ENCODE measurements at regions of chr11 and their contacts with region 1.

Region 1: GRCh38 chr11:76670485-76671236 is at the start of gene LRRC32:
- DNase-seq: peak; percentile 82
- H3K4me3 ChIP-seq: peak within 1 kb of the TSS; percentile 2 to 67 (median 59)
- H3K27ac ChIP-seq: peak within 1 kb of the TSS; percentile 79
- H3K4me1 ChIP-seq: peaks cover 53% of the 10 kb centered on the region
- H3K27me3 ChIP-seq: no peaks in the 10 kb centered on the region
- CTCF ChIP-seq: peak in 1 of 2 donors; percentile 33
- POLR2A ChIP-seq: peak; percentile 41
- total RNA-seq, gene LRRC32: 77.0 and 117 TPM in 2 replicates

Region 2: DNA sequence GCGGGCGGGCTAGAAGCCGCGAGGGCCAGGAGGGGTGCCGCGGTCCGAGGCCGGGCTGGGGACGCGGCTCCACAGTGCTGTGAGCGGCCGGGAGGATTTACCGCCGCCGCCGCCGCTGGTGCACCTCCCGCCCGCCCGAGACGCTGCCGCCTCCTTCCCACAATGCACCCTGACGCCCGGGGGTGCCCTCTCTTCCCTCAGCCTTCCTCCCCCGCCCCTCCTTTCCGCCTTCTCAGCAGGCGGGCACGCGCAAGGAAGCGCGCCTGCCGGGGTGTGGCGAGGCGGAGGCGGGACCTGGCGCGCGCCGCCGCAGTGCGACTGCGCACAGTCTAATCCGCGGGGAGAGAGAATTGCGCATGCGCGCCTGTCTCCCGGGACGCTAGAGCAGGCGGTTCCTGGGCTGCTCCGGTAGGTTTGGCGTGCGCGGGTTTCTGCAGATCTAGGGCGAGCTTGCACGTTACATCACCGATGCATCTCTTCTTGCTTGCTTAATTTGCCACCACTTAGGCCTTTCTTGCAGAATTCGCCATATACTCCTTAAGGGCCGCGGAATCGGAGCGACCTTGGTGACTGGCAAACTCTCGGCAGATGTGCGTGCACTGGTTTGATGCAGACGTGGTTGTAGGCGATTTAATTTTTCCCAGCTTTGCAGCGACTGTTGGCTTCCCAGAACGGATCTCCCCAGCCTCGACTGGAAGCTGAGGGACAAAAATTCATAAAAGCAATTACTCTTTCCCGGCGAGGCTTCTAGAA is 289.5 kb before region 1 on chr11 and contains the starts of genes GVQW3 and THAP12:
- CTCF ChIA-PET with region 1: no interaction called
- POLR2A ChIA-PET with region 1: no interaction called
- dilution Hi-C with region 1: no loop called
- intact Hi-C with region 1: loop called (anchors 5 kb)
- DNase-seq: peak; percentile 99
- H3K4me3 ChIP-seq: peak within 1 kb of the TSS; percentile 71 to 89 (median 82)
- H3K27ac ChIP-seq: peak within 1 kb of the TSS; percentile 27
- H3K4me1 ChIP-seq: peaks cover 18% of the 10 kb centered on the region
- H3K27me3 ChIP-seq: no peaks in the 10 kb centered on the region
- CTCF ChIP-seq: peak; percentile 7 to 8
- POLR2A ChIP-seq: peak; percentile 82
- total RNA-seq, gene GVQW3: 0.99 and 2.8 TPM in 2 replicates
- total RNA-seq, gene THAP12: 32.3 and 36.7 TPM in 2 replicates

Region 3: GRCh38 chr11:76444384-76445123 is 226.1 kb before region 1 on chr11 and contains the start of gene EMSY:
- CTCF ChIA-PET with region 1: no interaction called
- POLR2A ChIA-PET with region 1: no interaction called
- dilution Hi-C with region 1: no loop called
- intact Hi-C with region 1: loop called (anchors 2 kb)
- DNase-seq: peak; percentile 100
- H3K4me3 ChIP-seq: peak within 1 kb of the TSS; percentile 83 to 96 (median 89)
- H3K27ac ChIP-seq: peak within 1 kb of the TSS; percentile 94
- H3K4me1 ChIP-seq: peaks cover 12% of the 10 kb centered on the region
- H3K27me3 ChIP-seq: no peaks in the 10 kb centered on the region
- CTCF ChIP-seq: no peak
- POLR2A ChIP-seq: peak; percentile 98
- total RNA-seq, gene EMSY: 23.4 and 25.7 TPM in 2 replicates

Region 4: GRCh38 chr11:76588455-76589325 is 82.0 kb before region 1 on chr11:
- CTCF ChIA-PET with region 1: interaction called, 5 read pairs
- POLR2A ChIA-PET with region 1: interaction called, 3 read pairs
- dilution Hi-C with region 1: no loop called
- intact Hi-C with region 1: loop called (anchors 2 kb)
- DNase-seq: peak; percentile 99
- H3K4me3 ChIP-seq: no peak overlapping the region
- H3K27ac ChIP-seq: peak overlapping the region; percentile 94
- H3K4me1 ChIP-seq: peaks cover 23% of the 10 kb centered on the region
- H3K27me3 ChIP-seq: no peaks in the 10 kb centered on the region
- CTCF ChIP-seq: no peak
- POLR2A ChIP-seq: peak; percentile 88

Region 5: DNA sequence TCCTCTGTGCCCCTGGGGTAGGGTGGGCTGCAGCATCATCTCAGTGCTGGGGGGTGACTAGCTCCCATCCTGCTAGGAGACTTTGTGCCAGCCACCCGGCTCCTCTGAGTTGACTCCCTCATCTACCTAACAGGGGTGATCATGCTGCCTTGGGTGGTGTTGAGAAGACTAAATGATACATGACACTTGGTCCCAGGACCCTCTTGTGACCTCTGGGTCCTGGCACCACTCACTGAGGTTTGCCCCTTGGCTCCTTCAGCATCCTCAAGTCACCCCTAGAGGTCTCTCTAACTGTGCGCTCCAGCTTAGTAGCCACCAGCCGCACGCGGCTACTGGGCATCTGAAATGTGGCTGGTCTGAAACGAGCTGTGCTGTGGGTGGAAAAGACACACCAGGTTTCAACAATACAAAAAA is 72.2 kb before region 1 on chr11:
- CTCF ChIA-PET with region 1: interaction called, 18 read pairs
- POLR2A ChIA-PET with region 1: interaction called, 3 read pairs
- dilution Hi-C with region 1: no loop called
- intact Hi-C with region 1: no loop called
- DNase-seq: peak; percentile 42
- H3K4me3 ChIP-seq: no peak overlapping the region
- H3K27ac ChIP-seq: no peak overlapping the region
- H3K4me1 ChIP-seq: peaks cover 9% of the 10 kb centered on the region
- H3K27me3 ChIP-seq: no peaks in the 10 kb centered on the region
- CTCF ChIP-seq: peak; percentile 22 to 49
- POLR2A ChIP-seq: no peak